ENCODE measurements at regions of chr3 and their contacts with region 1.

Region 1: DNA sequence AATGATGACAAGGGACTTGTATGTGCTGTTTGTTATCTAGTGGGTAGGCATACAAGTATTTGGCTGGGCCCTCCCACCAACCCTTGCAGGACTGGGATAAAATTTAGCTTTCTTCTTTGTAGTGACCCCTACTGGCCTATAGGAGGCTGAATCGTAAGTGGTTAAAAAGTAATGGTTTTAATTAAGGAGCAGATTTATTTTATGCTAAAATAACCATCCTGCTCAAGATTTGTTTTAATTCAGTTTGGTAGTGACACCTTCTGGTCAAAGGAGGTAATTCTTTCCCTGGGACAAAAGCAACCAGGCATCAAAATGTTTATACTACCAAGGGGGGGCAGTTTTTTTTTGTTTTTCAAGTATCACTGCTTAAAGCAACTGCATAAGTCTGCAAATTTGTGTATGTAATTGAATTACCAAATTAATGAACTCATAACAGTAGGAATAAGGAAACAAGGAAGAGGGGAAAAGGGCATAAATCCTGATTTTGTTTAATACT is 70.7 kb downstream of the TOP2B start:
- DNase-seq: no peak
- H3K4me3 ChIP-seq: no peak overlapping the region
- H3K27ac ChIP-seq: peak overlapping the region in 1 of 4 donors; percentile 50
- H3K4me1 ChIP-seq: peaks cover 0 to 36% (median 18%) of the 10 kb centered on the region in 3 donors
- H3K27me3 ChIP-seq: no peaks in the 10 kb centered on the region
- CTCF ChIP-seq: peak; percentile 54 to 93 (median 81)
- POLR2A ChIP-seq: no peak

Region 2: DNA sequence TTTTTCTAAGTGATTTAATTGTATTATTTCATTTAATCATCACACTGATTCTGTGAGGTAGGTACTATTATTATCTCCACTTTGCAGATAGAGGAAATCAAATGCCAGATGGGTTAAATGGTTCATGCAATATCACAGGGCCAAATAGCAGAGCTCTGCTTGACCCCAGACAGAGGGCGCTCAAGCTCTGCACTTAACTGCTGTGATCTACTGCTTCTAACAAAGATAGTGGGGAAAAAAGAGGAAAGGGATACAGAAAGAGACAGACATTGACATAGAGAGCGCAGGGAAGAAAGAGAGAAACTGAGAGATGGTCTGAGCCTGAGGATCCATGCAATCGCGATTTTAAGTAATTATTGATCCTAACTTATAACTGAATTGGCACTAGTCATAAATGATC is 820.3 kb before region 1 on chr3:
- intact Hi-C with region 1: loop called (anchors 10 kb)
- DNase-seq: no peak
- H3K4me3 ChIP-seq: no peak overlapping the region
- H3K27ac ChIP-seq: no peak overlapping the region
- H3K4me1 ChIP-seq: peaks cover 0 to 4% (median 0%) of the 10 kb centered on the region in 3 donors
- H3K27me3 ChIP-seq: no peaks in the 10 kb centered on the region
- CTCF ChIP-seq: peak; percentile 29 to 78 (median 69)
- POLR2A ChIP-seq: no peak

Region 3: GRCh38 chr3:25009665-25010064 is 584.4 kb before region 1 on chr3:
- intact Hi-C with region 1: loop called (anchors 10 kb)
- DNase-seq: no peak
- H3K4me3 ChIP-seq: no peak overlapping the region
- H3K27ac ChIP-seq: no peak overlapping the region
- H3K4me1 ChIP-seq: peaks cover 7 to 28% (median 9%) of the 10 kb centered on the region in 3 donors
- H3K27me3 ChIP-seq: peaks cover 0 to 9% (median 0%) of the 10 kb centered on the region in 4 donors
- CTCF ChIP-seq: no peak
- POLR2A ChIP-seq: no peak

Region 4: DNA sequence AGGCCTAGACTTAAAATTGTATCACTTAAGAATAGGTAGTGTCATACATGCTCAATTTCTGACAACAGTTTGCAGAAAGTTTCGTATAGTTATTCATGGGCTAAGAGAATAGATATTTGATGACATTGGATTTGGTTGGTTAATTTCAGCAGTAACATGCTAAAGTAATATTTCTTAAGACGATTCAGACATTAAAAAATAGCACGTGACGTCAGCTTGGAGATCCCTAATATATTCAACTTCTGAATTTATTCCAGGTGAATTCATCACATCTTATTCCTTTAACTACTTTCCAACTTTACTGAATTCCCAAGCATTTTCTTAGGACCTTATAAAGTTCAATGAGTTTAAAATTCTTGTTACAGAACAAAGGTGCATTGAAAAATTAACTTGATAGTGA is 398.8 kb before region 1 on chr3:
- intact Hi-C with region 1: no loop called
- DNase-seq: no peak
- H3K4me3 ChIP-seq: no peak overlapping the region
- H3K27ac ChIP-seq: no peak overlapping the region
- H3K4me1 ChIP-seq: no peaks in the 10 kb centered on the region
- H3K27me3 ChIP-seq: no peaks in the 10 kb centered on the region
- CTCF ChIP-seq: no peak
- POLR2A ChIP-seq: no peak

Region 5: DNA sequence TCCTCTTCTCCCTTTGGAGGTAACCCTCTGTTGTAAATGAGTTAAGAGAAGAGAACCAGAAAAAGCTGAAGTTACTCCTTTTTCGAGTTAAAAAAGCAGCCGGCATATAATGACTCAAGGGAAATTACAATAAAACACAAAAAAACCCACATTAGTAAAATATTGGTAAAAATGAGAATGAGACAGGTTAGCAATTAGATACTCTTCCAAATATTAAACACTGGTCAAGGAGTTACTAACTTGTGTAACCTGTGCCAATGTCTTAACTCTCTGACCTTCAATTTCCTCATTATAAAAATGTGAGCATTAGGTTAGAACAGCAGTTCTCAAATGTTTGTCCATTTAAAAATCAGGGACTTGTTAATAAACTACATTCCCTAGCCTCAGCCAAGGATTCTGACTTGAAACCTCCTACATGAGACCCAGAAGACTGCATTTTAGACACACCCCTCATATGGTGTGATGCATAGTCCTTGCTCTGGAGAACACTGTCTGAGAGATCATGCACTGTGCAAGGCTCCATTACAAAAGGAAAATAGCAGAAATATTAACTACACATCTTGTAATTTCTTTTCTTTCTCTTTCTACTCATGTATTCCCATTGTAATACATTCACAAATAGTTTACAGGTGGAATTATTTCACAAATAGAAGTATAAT is 113.3 kb after region 1 on chr3:
- intact Hi-C with region 1: no loop called
- DNase-seq: no peak
- H3K4me3 ChIP-seq: no peak overlapping the region
- H3K27ac ChIP-seq: no peak overlapping the region
- H3K4me1 ChIP-seq: no peaks in the 10 kb centered on the region
- H3K27me3 ChIP-seq: peaks cover 0 to 9% (median 1%) of the 10 kb centered on the region in 4 donors
- CTCF ChIP-seq: no peak
- POLR2A ChIP-seq: no peak